ENCODE measurements at regions of chr20 and their contacts with region 1.

Region 1: DNA sequence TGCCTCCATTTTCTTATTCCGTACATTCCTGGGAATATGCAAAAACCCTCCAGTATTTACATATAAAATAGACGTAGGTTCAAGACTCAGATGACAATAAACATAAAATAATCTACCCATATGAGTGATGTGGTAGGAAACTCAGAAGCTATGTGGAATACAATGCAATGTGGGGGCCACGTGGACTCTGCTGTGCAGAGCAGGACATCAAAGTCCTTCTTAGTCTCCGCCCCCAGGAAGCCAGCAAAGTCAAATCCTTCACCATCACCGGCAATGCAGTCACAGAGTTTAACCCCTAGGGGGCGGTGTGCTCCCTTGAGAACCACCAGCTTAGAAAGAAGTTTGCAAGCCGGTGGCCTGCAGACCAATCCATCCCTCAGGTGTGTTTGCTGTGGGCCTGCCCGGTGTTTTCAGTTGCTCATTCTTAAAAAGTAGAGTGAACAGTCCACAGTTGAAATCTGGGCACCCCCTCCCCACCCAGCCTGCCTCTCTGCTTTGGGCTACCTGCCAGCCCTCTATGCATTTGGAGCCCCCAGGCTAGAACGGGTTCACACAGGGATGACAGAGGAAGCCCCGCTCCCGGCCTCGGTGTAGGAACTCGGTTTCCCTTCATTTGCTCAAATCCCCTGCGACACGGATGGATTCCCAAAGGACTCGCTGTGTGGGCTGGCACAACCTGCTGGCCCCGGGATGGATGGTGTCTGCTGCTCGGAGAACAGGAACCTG is 59.9 kb downstream of the SULF2 start:
- DNase-seq: peak; percentile 87
- CTCF ChIP-seq: peak; percentile 82

Region 2: GRCh38 chr20:47317127-47317895 is 408.1 kb before region 1 on chr20:
- CTCF ChIA-PET with region 1: no interaction called
- POLR2A ChIA-PET with region 1: no interaction called
- DNase-seq: no peak
- CTCF ChIP-seq: no peak

Region 3: GRCh38 chr20:47708140-47708807 is 17.1 kb before region 1 on chr20:
- CTCF ChIA-PET with region 1: interaction called, 26 read pairs
- POLR2A ChIA-PET with region 1: no interaction called
- DNase-seq: peak; percentile 75
- CTCF ChIP-seq: no peak

Region 4: GRCh38 chr20:47713878-47714450 is 11.4 kb before region 1 on chr20:
- CTCF ChIA-PET with region 1: interaction called, 26 read pairs
- POLR2A ChIA-PET with region 1: no interaction called
- DNase-seq: no peak
- CTCF ChIP-seq: no peak